ENCODE measurements at regions of chr14 and their contacts with region 1.

Region 1: DNA sequence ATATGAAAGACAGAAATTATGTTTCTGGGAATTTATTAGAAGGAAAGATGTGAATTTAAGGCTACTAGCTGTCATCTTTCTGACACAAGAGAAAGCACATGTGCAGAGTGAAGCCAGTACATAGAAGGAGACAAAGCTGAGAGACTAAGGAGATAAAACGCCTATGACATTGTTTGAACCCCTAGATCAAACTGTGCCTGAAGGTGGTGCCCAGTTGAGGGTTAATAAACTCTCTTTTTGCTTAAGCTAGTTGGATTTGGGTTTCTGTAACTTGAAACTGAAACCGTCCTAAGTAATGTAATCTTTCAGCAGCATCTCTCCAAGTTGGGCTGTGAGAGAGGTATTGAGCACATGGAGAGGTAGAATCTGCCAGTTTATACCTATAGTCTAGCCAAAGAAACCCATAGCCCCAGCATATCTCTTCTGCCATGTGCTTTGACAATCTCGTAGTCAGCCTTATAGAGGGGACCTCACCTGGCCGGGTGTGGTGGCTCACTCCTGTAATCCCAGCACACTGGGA is 84.2 kb downstream of the LRRC74A start:
- DNase-seq: no peak
- ATAC-seq: no peak
- H3K4me3 ChIP-seq: no peak overlapping the region
- H3K27ac ChIP-seq: no peak overlapping the region
- H3K4me1 ChIP-seq: no peaks in the 10 kb centered on the region
- H3K27me3 ChIP-seq: no peaks in the 10 kb centered on the region

Region 2: GRCh38 chr14:76977793-76978720 is 67.6 kb after region 1 on chr14:
- intact Hi-C with region 1: no loop called
- DNase-seq: peak; percentile 61 to 83 (median 79)
- ATAC-seq: peak; percentile 67 to 79
- H3K4me3 ChIP-seq: no peak overlapping the region
- H3K27ac ChIP-seq: no peak overlapping the region
- H3K4me1 ChIP-seq: no peaks in the 10 kb centered on the region
- H3K27me3 ChIP-seq: no peaks in the 10 kb centered on the region

Region 3: DNA sequence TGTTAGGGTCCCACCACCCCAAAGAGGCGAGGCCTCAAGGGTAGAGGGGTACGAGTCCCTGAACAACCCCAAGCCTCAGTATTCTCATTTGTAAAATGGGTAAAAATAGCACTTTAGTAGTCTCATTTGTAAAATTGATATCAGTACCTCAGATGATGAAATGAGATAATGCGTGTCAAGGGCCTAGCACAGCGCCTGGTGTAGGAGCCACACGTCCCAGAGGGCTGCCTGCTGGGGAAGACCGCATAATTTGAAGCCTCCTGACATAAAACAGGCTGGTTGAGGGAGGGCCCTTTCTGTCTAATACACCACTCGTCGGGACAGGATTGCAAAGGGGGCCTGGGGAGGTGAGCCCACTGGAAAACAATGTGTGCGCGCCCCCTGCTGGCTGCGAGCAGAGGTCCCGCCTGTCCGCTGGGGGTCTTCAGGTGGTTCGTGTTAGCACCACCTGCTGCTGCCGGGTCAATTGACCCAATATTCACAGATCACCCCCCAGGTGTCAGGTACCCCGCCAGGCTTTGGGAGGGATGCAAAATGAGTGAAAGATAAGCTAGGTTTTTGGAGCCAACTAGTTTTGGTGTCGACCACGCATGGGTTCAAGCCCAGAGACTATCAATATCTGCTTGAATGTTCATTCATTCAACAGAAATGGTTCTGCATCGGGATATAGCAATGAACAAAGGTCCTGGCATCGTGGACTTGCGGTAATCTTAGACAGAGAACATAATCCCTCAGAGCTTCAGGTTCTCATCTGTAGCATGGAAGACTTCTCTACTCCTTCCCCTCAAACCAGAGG is 142.8 kb after region 1 on chr14:
- intact Hi-C with region 1: loop called (anchors 1 to 5 kb)
- DNase-seq: peak; percentile 78 to 92 (median 91)
- ATAC-seq: peak; percentile 64 to 76
- H3K4me3 ChIP-seq: no peak overlapping the region
- H3K27ac ChIP-seq: peak overlapping the region; percentile 50
- H3K4me1 ChIP-seq: peaks cover 8% of the 10 kb centered on the region
- H3K27me3 ChIP-seq: no peaks in the 10 kb centered on the region

Region 4: DNA sequence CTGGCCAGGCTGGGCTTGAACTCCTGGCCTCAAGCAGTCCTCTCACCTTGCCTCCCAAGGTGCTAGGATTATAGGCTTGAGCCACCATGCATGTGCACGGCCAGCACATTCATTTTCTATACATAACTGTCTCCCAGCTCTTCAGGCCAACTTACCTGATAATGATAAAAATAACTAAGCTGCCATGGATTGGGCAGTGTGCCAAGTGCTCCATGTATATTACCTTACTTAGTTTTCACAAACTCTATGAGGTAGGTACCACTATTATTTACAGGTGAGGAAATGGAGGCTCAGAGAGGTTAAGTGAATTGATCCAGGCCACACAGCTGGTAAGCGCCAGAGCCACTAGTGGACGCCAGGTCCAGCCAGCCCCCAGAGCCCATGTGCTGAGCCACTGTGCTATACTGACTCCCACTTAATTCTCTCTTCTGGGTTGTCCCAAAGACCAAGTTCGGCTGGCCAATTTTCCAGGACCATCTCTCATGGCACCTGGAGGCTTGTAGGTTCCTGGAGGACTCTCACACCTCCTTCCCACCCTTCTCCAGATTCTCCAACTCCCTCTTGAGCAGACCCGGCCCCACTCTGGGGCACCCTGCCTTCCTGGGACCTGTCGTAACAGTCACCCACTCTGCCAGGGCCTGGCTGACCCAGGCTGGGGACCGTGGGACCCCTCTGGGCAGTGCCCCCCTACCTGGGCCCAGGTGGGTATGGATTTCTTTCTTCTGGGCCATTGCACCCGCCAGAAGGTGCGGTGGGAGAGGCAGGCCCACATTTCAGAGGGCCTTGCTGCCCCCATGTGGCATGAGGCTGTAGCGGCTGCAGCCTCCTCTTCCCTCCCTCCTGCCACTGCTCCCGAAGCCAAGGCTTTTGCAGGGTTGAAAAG is 157.4 kb after region 1 on chr14:
- intact Hi-C with region 1: loop called in 1 of 4 experiments (anchors 5 kb)
- DNase-seq: peak; percentile 74 to 87 (median 87)
- ATAC-seq: peak; percentile 71 to 78
- H3K4me3 ChIP-seq: no peak overlapping the region
- H3K27ac ChIP-seq: peak overlapping the region; percentile 21
- H3K4me1 ChIP-seq: peaks cover 12% of the 10 kb centered on the region
- H3K27me3 ChIP-seq: no peaks in the 10 kb centered on the region

Measured in right cardiac atrium (tissue), 5 donors.